ENCODE measurements at regions of chr7 and their contacts with region 1.

Region 1: DNA sequence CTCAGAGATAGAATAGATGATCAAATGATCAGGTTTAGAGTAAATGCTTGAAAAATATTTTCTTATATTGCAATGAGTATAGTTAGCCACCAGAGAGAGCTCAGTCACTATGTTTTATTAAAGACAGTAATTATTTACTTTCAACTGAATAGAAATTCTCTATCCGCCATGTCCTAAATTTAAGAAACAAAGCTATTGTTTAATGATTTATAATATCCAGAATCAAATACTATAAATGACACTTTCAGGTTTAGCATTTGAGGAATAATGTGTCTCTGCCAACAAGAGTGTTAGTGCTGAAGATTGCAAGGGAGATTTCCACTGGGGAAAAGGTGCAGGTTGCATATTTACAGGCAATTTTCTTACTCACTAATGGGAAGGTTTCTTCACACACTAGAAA is 184.7 kb downstream of the DGKB start:
- DNase-seq: peak; percentile 9

Region 2: DNA sequence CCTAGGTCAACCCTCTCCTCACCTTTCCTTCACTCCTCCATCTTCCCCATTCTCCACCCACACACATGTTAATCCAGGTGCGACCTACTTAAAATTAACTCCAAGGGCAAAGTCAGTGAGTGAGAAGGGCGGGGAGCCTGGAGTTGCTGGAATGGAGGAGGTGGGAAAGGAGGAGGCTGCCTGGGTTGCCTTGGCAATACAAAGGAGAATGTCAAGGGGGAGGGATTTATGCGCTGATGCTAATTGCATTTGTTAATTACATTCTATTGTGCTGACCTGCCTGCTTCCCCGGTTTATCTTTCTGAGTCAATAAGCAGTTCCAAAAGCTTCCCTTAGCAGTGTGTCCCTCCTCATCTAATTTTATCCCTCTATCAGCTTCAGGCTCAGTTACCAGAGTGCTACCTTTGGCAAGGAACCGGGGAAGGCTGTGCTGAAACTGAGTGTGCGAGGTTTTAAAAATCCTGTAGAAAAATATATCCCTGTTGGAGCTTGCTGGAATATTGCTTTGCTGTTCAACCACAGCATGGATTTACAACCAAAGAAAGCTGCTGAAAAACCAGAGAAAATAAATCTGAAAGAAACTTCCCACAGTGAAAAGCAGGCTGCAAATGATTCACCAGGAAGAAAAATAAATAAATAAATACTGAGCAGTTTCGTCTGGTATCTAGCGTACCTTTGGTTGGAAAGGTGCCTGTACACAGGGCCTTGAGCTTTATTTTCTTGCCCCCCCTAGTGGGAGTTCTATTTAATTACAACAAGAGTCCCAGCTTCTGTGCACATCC is 297.9 kb after region 1 on chr7:
- CTCF ChIA-PET with region 1: interaction called, 23 read pairs
- POLR2A ChIA-PET with region 1: no interaction called
- DNase-seq: peak; percentile 65